Activated CD4-positive, alpha-beta memory T cell treated with anti-CD3 and anti-CD28 coated beads, Interleukin-2, amount 10 ng/mL, durations not matched to agents 7 days and 5 days (primary cell): ENCODE measurements at regions of chr10 and their contacts with region 1.

Region 1: DNA sequence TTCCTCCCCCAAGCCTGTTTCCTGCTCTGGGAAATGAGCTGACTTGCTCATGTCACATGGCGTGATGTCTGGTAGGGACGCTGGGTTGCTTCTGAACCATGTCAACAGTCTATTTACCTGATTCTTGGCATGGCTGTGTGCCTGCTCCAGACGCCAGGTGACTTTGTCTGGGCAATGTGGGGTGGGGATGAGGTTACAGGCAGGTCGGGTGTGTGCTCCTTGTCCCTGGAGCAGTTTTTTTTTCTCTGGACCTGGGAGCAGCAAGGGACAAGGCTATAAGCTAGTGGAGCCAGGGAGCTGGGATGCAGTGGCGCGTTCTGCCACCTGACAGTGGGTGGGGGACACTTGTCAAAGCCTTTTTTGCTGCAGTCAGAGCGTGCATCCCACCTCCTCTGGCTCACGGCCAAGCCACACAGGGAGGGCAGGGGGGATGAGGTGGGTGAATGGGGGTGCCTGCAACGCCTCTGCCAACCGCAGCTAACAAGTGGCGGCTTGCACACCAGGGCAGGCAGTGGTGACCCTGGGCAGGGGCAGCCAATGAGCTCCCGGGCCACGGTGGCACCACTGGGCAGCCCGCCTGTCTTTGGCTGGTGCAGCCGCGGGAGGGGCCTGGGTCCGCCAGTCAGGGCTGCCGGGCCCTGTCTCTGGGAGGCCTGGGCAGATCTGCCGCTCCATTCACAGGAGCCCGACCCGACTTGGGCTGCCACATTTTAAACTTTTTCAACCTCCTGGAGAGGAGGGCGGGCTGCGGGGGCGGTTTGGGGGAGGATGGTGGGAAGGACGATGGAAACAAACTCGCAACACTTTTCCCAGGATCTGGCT is 22.9 kb downstream of the DNAJB12 start:
- DNase-seq: peak; percentile 95
- H3K4me3 Mint-ChIP-seq: peak overlapping the region; percentile 65
- H3K27ac Mint-ChIP-seq: peak overlapping the region; percentile 90
- H3K4me1 Mint-ChIP-seq: peaks cover 95% of the 10 kb centered on the region
- H3K27me3 Mint-ChIP-seq: no peaks in the 10 kb centered on the region

Region 2: GRCh38 chr10:72126184-72126871 is 205.5 kb before region 1 on chr10:
- CTCF ChIA-PET with region 1: interaction called, 63 read pairs
- POLR2A ChIA-PET with region 1: interaction called, 5 read pairs
- DNase-seq: no peak
- H3K4me3 Mint-ChIP-seq: no peak overlapping the region
- H3K27ac Mint-ChIP-seq: no peak overlapping the region
- H3K4me1 Mint-ChIP-seq: peaks cover 28% of the 10 kb centered on the region
- H3K27me3 Mint-ChIP-seq: no peaks in the 10 kb centered on the region

Region 3: GRCh38 chr10:72200883-72201282 is 130.9 kb before region 1 on chr10:
- CTCF ChIA-PET with region 1: no interaction called
- POLR2A ChIA-PET with region 1: no interaction called
- DNase-seq: no peak
- H3K4me3 Mint-ChIP-seq: no peak overlapping the region
- H3K27ac Mint-ChIP-seq: no peak overlapping the region
- H3K4me1 Mint-ChIP-seq: no peaks in the 10 kb centered on the region
- H3K27me3 Mint-ChIP-seq: no peaks in the 10 kb centered on the region

Region 4: GRCh38 chr10:72223743-72224101 is 108.1 kb before region 1 on chr10:
- CTCF ChIA-PET with region 1: interaction called, 36 read pairs
- POLR2A ChIA-PET with region 1: interaction called, 6 read pairs
- DNase-seq: no peak
- H3K4me3 Mint-ChIP-seq: no peak overlapping the region
- H3K27ac Mint-ChIP-seq: peak overlapping the region; percentile 58
- H3K4me1 Mint-ChIP-seq: peaks cover 52% of the 10 kb centered on the region
- H3K27me3 Mint-ChIP-seq: no peaks in the 10 kb centered on the region

Region 5: GRCh38 chr10:72273410-72274212 is 58.2 kb before region 1 on chr10 and contains the start of gene DDIT4:
- CTCF ChIA-PET with region 1: interaction called, 89 read pairs
- POLR2A ChIA-PET with region 1: interaction called, 225 read pairs
- DNase-seq: peak; percentile 99
- H3K4me3 Mint-ChIP-seq: peak within 1 kb of the TSS; percentile 100
- H3K27ac Mint-ChIP-seq: peak within 1 kb of the TSS; percentile 96
- H3K4me1 Mint-ChIP-seq: peaks cover 58% of the 10 kb centered on the region
- H3K27me3 Mint-ChIP-seq: no peaks in the 10 kb centered on the region
- total RNA-seq, gene DDIT4: 475 to 481 TPM

Region 6: GRCh38 chr10:72308320-72308987 is 23.4 kb before region 1 on chr10:
- CTCF ChIA-PET with region 1: interaction called, 14 read pairs
- POLR2A ChIA-PET with region 1: interaction called, 19 read pairs
- DNase-seq: peak; percentile 55
- H3K4me3 Mint-ChIP-seq: no peak overlapping the region
- H3K27ac Mint-ChIP-seq: peak overlapping the region; percentile 76
- H3K4me1 Mint-ChIP-seq: peaks cover 67% of the 10 kb centered on the region
- H3K27me3 Mint-ChIP-seq: no peaks in the 10 kb centered on the region

Region 7: DNA sequence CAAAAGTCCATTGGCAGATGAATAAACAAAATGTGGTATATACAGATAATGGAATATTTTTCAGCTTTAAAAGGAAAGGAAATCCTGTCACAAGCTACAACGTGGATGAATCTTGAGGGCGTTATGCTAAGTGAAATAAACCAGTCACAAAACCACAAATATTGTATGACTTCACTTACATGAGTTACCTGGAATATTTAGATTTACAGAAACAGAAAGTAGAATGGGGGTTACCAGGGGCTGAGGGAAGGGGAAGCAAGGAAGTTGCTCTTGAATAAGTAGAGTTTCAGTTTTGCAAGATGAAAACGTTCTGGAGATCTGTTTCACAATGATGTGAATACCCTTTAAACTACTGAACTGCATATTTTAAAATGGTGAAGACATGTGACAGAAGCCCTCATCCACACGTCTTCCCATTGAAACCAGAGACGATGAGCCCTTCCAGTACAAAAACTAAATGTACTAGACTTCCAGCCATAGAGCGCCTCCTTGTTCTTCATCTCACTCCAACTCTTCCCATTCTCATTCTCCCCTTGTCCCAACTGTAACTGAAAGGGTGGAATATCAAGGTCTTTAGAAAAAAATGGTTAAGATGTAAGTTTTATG is 231.6 kb after region 1 on chr10:
- CTCF ChIA-PET with region 1: no interaction called
- POLR2A ChIA-PET with region 1: no interaction called
- DNase-seq: no peak
- H3K4me3 Mint-ChIP-seq: peak overlapping the region; percentile 68
- H3K27ac Mint-ChIP-seq: peak overlapping the region; percentile 76
- H3K4me1 Mint-ChIP-seq: peaks cover 31% of the 10 kb centered on the region
- H3K27me3 Mint-ChIP-seq: no peaks in the 10 kb centered on the region